BJ (cell line): ENCODE measurements at regions of chr2 and their contacts with region 1.

Region 1: DNA sequence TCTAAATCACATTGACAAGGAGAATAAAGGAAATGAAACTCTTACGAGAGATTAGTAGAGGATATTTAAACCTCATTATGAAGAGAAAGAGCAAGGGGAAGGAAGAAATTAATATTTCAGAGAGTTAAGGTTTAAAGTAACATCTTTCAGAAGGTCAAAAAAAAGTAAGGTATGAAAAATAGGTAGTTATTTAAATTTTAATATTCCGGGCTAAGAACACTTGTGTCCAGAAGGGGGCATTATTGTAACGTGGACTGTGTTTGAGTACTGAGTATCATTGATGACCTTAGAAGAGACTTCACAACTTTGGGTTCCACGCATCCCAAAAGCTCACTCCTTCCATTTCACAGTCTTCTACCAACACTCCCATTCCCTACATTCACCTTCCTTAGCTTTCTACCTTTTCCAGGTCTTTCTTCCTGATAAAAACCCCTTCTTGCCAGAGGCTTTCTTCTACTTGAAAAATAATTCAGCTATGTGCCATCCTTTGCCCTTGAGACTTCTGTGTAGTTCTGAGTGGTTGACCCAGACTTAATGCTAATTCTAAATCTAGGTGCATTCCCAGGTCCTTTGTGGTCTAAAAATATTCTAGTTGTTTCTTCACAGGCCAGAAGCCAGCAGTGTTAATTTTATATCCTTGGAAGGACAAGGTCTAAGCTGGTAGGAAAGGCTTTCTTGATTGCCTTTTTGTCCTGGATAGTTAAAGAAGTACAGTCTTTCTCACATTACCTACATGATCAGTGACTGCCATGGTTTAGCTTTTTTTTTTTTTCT is 16.5 kb downstream of the DYNC1I2 start:
- DNase-seq: no peak
- H3K4me3 ChIP-seq: no peak overlapping the region
- H3K27me3 ChIP-seq: no peaks in the 10 kb centered on the region
- CTCF ChIP-seq: peak; percentile 49

Region 2: GRCh38 chr2:171598713-171599319 is 104.9 kb before region 1 on chr2:
- CTCF ChIA-PET with region 1: interaction called, 27 read pairs
- POLR2A ChIA-PET with region 1: no interaction called
- DNase-seq: no peak
- H3K4me3 ChIP-seq: no peak overlapping the region
- H3K27me3 ChIP-seq: peaks cover 6% of the 10 kb centered on the region
- CTCF ChIP-seq: peak; percentile 80

Region 3: GRCh38 chr2:171687287-171688128 is 16.3 kb before region 1 on chr2 and contains the start of gene DYNC1I2:
- CTCF ChIA-PET with region 1: interaction called, 12 read pairs
- POLR2A ChIA-PET with region 1: interaction called, 3 read pairs
- DNase-seq: peak; percentile 85
- H3K4me3 ChIP-seq: peak within 1 kb of the TSS; percentile 75
- H3K27me3 ChIP-seq: no peaks in the 10 kb centered on the region; the same call in 1 of the 2 replicates
- CTCF ChIP-seq: 0 out of 2 replicates have a peak, but pooled peaks have one; percentile 7
- polyA plus RNA-seq, gene DYNC1I2: 96.9 and 139 TPM in 2 replicates

Region 4: DNA sequence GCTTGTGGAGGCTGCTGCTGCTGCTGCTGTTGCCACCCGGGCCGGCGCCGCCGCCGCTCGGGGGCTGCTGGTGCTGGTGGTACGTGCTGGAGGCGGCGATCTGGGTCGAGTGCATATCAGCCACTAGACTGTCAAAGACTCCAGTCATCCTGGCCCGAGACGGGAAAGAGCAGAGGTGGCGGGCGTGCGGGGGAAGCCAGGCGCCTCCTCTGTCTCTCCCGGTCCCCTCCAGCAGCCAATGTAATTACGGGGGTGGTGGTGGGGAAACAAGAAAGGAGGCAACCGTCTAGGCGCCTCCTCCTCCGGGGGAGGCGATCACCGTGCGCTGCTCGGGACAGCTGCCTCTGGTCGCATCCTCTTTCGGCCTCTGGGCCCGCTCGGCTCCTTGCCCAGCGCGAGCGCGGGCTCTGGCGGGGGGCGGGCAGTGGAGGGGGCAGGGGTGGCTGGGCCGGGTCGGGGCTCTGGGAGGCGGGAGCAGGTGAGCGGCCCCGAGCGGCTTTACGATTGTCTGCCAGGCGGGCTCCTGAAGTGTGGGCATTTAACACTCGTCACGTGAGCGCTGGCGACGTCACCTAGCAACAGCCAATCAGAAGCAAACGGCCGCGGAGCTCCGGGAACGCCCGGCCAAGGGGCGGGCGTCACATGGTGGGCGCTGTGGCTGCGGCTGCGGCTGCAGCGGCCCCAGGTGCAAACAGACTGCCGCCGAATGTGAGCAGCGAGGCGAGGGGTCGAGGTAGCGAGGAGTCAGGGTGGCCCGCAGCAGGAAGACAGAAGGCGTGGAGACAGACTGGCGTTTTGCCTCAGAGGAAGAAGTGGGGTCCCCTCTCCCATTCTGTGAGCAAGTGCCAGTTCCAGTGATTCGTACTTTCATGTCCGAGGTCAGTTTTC is 398.9 kb after region 1 on chr2 and contains the start of gene DLX2:
- CTCF ChIA-PET with region 1: interaction called, 11 read pairs
- POLR2A ChIA-PET with region 1: no interaction called
- DNase-seq: no peak
- H3K4me3 ChIP-seq: peak within 1 kb of the TSS; percentile 49
- H3K27me3 ChIP-seq: no peaks in the 10 kb centered on the region
- CTCF ChIP-seq: no peak
- polyA plus RNA-seq, gene DLX2: 0.16 and 0.20 TPM in 2 replicates

Region 5: DNA sequence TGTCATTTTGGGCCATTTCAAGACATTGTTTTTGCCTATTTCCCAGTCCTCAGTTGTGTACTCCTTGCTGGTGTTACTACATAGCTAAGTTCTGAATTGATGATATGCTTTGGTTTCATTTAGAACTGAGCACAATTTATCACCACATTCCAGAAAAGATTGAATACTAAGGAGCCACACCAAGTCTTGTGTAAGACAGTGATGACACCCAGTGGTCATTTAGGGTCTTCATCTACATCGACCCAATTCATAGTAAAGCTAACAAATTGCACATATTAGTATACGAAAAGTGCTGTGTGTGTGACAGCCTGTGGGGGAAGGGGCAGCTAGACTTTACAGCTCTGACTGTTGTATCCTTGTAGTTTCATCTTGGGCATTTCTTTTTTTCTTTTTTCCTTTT is 409.9 kb after region 1 on chr2:
- CTCF ChIA-PET with region 1: interaction called, 43 read pairs
- POLR2A ChIA-PET with region 1: no interaction called
- DNase-seq: no peak
- H3K4me3 ChIP-seq: no peak overlapping the region
- H3K27me3 ChIP-seq: no peaks in the 10 kb centered on the region
- CTCF ChIP-seq: peak; percentile 40

Region 6: GRCh38 chr2:172131713-172132555 is 428.2 kb after region 1 on chr2:
- CTCF ChIA-PET with region 1: interaction called, 10 read pairs
- POLR2A ChIA-PET with region 1: no interaction called
- DNase-seq: no peak
- H3K4me3 ChIP-seq: no peak overlapping the region
- H3K27me3 ChIP-seq: no peaks in the 10 kb centered on the region
- CTCF ChIP-seq: no peak